ENCODE measurements at regions of chr16 and their contacts with region 1.

Region 1: DNA sequence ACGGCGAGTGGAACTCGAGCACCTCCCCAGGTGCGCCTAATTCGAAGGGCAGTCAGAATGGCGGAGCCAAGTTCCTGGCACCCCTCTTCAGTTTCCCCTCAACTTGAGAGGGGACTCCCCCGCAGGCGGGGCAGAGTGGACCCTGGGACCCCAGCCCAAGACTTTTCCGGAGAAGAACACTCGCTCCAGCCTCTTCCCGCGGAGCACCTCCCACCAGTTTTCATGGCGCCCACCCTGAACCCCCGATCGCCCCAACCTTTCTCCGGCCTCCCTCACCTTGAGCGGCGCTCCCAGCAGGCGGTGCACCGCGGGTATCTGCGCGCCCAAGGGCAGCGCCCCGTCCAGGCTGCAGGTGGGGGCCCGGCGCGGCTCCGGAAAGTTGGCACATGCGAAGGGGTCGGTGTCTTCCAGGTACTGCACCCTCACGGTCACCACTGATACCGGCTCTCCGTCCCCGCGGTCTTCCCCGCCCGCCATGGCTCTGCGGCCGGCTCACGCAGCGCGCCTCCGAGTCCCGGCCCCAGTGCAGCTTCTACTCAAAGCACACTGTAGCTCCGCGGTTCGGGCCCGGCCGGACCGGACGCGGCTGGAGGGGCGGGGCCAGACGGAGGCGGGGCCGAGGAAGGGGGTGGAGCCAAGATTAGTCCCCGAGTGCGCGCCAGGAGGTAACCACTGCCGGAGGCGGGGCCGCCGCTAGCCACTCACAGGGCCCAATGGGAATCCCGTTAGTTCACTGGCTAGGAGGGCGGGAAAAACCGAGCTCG is at the start of gene FHOD1:
- DNase-seq: peak; percentile 88 to 100 (median 91)
- ATAC-seq: peak; percentile 85
- H3K4me3 ChIP-seq: peak within 1 kb of the TSS; percentile 68
- H3K4me3 Mint-ChIP-seq: peak within 1 kb of the TSS; percentile 83 to 96 (median 91)
- H3K27ac ChIP-seq: peak within 1 kb of the TSS; percentile 60
- H3K27ac Mint-ChIP-seq: peak within 1 kb of the TSS; percentile 70 to 92 (median 80)
- H3K4me1 ChIP-seq: peaks cover 31 to 39% of the 10 kb centered on the region in 2 donors
- H3K4me1 Mint-ChIP-seq: peaks cover 37 to 51% (median 45%) of the 10 kb centered on the region in 7 donors
- H3K27me3 ChIP-seq: no peaks in the 10 kb centered on the region
- H3K27me3 Mint-ChIP-seq: peaks cover 0 to 20% (median 0%) of the 10 kb centered on the region in 5 donors
- total RNA-seq, gene FHOD1: 23.7 to 81.7 (median 35.1) TPM

Region 2: DNA sequence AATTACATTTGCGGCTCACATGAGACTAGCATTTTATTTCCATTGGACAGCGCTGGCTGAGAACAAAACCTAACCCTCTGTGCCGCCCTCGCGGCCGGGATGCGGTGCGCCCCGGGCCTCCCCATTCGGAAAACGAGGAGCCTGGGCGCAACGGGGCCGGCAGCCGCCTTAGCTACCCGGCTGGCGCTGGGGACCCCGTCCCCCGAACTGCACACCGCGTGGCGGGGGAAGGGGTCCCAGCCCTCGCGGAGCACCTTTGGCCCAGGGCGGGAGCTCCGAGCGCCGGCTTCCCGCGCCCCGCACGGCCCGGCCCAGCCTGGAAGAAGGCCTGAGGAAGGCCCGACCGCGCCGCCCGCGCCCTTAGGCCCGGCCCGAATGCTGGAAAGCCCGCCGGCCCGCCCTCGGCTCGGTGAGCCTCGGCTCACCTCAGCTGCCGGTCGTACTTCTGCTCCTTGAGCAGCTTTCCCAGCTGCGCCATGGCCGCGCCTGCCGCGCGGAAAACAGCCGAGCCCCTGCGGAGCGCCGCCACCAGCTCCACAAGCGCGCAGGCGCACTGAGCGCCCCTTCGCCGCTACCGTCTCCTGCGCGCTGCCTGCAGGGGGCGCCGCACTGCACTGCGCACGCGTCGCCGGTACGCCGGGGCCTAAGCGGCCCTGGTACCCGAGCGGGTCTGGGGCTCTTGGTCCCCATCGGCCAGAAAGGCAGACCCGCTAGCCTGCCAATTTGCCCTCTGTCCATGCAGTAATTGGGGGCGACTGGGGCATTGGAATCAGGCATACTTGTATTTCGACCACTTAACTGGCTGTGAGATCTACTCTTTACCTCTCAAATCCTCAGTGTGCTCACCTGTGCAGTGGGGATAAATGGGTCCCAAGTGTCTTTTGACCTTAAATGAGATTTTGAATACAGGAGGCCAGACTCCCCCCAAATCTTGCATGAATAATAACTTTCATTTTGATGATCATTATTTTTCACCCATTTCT is 416.4 kb before region 1 on chr16 and contains the start of gene NAE1:
- CTCF ChIA-PET with region 1: no interaction called
- POLR2A ChIA-PET with region 1: no interaction called
- intact Hi-C with region 1: no loop called
- DNase-seq: peak; percentile 82 to 97 (median 93)
- ATAC-seq: peak; percentile 99
- H3K4me3 ChIP-seq: peak within 1 kb of the TSS; percentile 84
- H3K4me3 Mint-ChIP-seq: peak within 1 kb of the TSS; percentile 75 to 89 (median 79)
- H3K27ac ChIP-seq: peak within 1 kb of the TSS; percentile 78
- H3K27ac Mint-ChIP-seq: peak within 1 kb of the TSS in 8 of 9 donors; percentile 32 to 86 (median 59)
- H3K4me1 ChIP-seq: peaks cover 19 to 28% of the 10 kb centered on the region in 2 donors
- H3K4me1 Mint-ChIP-seq: peaks cover 15 to 36% (median 34%) of the 10 kb centered on the region in 7 donors
- H3K27me3 ChIP-seq: no peaks in the 10 kb centered on the region
- H3K27me3 Mint-ChIP-seq: no peaks in the 10 kb centered on the region
- total RNA-seq, gene NAE1: 62.3 to 96.6 (median 90.7) TPM

Region 3: DNA sequence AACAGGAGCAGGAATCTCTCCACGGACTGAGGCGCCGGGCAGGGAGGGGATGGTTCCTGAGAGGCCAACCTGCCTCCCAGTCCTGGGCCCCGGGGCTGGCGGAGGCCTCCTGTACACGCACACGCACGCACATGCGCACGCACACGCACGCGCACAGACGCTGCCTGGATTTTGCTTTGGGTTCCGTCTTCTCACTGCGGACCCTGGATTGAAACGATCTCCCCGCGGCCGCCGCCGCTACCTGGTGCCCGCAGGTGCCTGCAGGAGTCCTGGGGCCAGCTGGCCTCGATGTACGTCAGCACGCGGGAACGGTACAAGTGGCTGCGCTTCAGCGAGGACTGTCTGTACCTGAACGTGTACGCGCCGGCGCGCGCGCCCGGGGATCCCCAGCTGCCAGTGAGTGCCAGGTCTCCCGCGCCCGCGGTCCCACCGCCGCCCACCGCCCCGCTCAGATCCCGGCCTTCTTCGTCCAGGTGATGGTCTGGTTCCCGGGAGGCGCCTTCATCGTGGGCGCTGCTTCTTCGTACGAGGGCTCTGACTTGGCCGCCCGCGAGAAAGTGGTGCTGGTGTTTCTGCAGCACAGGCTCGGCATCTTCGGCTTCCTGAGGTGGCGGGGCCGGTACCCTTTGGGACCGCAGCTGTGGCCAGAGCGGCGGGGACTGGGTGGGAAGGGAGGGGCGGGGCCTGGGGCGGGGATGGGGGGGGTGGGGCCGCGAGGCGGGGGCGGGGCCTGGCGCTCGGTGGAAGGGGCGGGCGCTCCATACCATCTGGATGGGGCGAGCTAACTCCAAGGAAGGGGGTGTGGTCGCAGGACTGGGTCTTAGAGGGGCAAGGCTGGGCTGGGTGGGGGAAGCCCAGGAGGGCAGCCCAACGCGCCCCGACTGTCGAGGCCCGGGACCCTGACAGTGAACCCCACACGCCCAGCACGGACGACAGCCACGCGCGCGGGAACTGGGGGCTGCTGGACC is 246.4 kb before region 1 on chr16:
- CTCF ChIA-PET with region 1: no interaction called
- POLR2A ChIA-PET with region 1: no interaction called
- intact Hi-C with region 1: loop called in 1 of 2 experiments (anchors 2 kb)
- DNase-seq: peak; percentile 39 to 73 (median 61)
- ATAC-seq: peak; percentile 81
- H3K4me3 ChIP-seq: peak overlapping the region; percentile 75
- H3K4me3 Mint-ChIP-seq: peak overlapping the region; percentile 65 to 88 (median 84)
- H3K27ac ChIP-seq: peak overlapping the region; percentile 72
- H3K27ac Mint-ChIP-seq: peak overlapping the region; percentile 68 to 89 (median 80)
- H3K4me1 ChIP-seq: peaks cover 4 to 9% of the 10 kb centered on the region in 2 donors
- H3K4me1 Mint-ChIP-seq: peaks cover 6 to 42% (median 14%) of the 10 kb centered on the region in 7 donors
- H3K27me3 ChIP-seq: no peaks in the 10 kb centered on the region
- H3K27me3 Mint-ChIP-seq: no peaks in the 10 kb centered on the region

Region 4: GRCh38 chr16:67063008-67063407 is 184.1 kb before region 1 on chr16:
- CTCF ChIA-PET with region 1: no interaction called
- POLR2A ChIA-PET with region 1: no interaction called
- intact Hi-C with region 1: no loop called
- DNase-seq: no peak
- ATAC-seq: no peak
- H3K4me3 ChIP-seq: no peak overlapping the region
- H3K4me3 Mint-ChIP-seq: peak overlapping the region in 3 of 10 donors; percentile 10 to 51 (median 14)
- H3K27ac ChIP-seq: no peak overlapping the region
- H3K27ac Mint-ChIP-seq: peak overlapping the region in 5 of 9 donors; percentile 22 to 51 (median 40)
- H3K4me1 ChIP-seq: peaks cover 0 to 7% of the 10 kb centered on the region in 2 donors
- H3K4me1 Mint-ChIP-seq: peaks cover 11 to 27% (median 20%) of the 10 kb centered on the region in 7 donors
- H3K27me3 ChIP-seq: no peaks in the 10 kb centered on the region
- H3K27me3 Mint-ChIP-seq: no peaks in the 10 kb centered on the region

Region 5: GRCh38 chr16:67183627-67184328 is 63.3 kb before region 1 on chr16 and contains the start of gene MATCAP1:
- CTCF ChIA-PET with region 1: no interaction called
- POLR2A ChIA-PET with region 1: no interaction called
- intact Hi-C with region 1: loop called (anchors 1 to 2 kb)
- DNase-seq: peak; percentile 90 to 98 (median 96)
- ATAC-seq: peak; percentile 97
- H3K4me3 ChIP-seq: peak within 1 kb of the TSS; percentile 79
- H3K4me3 Mint-ChIP-seq: peak within 1 kb of the TSS in 5 of 10 donors; percentile 48 to 91 (median 86)
- H3K27ac ChIP-seq: peak within 1 kb of the TSS; percentile 97
- H3K27ac Mint-ChIP-seq: peak within 1 kb of the TSS in 2 of 9 donors; percentile 58 to 67
- H3K4me1 ChIP-seq: peaks cover 12 to 15% of the 10 kb centered on the region in 2 donors
- H3K4me1 Mint-ChIP-seq: peaks cover 8 to 24% (median 13%) of the 10 kb centered on the region in 7 donors
- H3K27me3 ChIP-seq: no peaks in the 10 kb centered on the region
- H3K27me3 Mint-ChIP-seq: peaks cover 4 to 15% (median 4%) of the 10 kb centered on the region in 5 donors
- total RNA-seq, gene MATCAP1: 4.3 to 88.1 (median 11.0) TPM

Region 6: DNA sequence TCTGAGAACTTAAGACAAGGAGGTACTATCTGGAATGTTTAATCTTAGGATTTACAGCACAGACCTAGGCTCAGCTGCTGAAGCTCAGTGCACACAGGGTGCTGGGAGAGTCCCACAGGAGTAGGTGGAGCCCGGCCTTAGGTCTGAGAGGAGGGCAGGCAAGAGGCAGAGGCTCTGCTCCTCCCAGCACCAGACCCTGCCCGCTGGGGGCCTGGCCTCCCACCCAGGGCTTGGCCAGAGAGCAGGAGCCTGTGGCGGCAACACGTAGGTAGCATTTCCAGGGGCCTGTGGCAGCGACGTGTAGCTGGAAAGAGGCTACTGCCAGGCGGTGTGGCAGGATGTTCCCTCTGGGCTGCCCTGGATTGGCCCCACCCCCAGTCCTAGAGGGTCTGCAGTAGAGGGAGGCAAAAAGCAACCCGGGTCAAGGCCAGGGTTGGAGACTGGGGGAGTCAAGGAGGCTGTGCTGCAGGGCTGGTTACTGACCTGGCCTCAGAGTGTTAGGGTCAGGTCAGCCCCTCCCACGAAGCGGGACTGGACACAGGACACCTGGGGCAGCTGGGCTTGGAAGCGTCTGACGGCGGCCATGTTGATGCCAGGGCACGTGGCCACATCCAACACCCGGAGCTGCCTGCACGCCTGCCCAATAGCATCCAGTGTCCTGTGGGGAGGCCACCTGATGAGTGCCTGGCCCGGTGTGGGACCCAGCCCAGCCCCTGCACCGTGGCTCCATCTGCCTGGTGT is 39.8 kb before region 1 on chr16:
- CTCF ChIA-PET with region 1: no interaction called
- POLR2A ChIA-PET with region 1: no interaction called
- intact Hi-C with region 1: no loop called
- DNase-seq: no peak
- ATAC-seq: no peak
- H3K4me3 ChIP-seq: no peak overlapping the region
- H3K4me3 Mint-ChIP-seq: no peak overlapping the region
- H3K27ac ChIP-seq: no peak overlapping the region
- H3K27ac Mint-ChIP-seq: no peak overlapping the region
- H3K4me1 ChIP-seq: no peaks in the 10 kb centered on the region
- H3K4me1 Mint-ChIP-seq: peaks cover 0 to 3% (median 0%) of the 10 kb centered on the region in 7 donors
- H3K27me3 ChIP-seq: no peaks in the 10 kb centered on the region
- H3K27me3 Mint-ChIP-seq: no peaks in the 10 kb centered on the region

Region 7: GRCh38 chr16:67236563-67237395 is 10.3 kb before region 1 on chr16:
- CTCF ChIA-PET with region 1: no interaction called
- POLR2A ChIA-PET with region 1: interaction called, 7 read pairs
- intact Hi-C with region 1: loop called in 1 of 2 experiments (anchors 1 kb)
- DNase-seq: peak; percentile 47 to 89 (median 53)
- ATAC-seq: peak; percentile 94
- H3K4me3 ChIP-seq: no peak overlapping the region
- H3K4me3 Mint-ChIP-seq: peak overlapping the region in 7 of 10 donors; percentile 18 to 61 (median 50)
- H3K27ac ChIP-seq: no peak overlapping the region
- H3K27ac Mint-ChIP-seq: peak overlapping the region in 7 of 9 donors; percentile 61 to 87 (median 77)
- H3K4me1 ChIP-seq: peaks cover 0 to 5% of the 10 kb centered on the region in 2 donors
- H3K4me1 Mint-ChIP-seq: peaks cover 0 to 21% (median 4%) of the 10 kb centered on the region in 7 donors
- H3K27me3 ChIP-seq: no peaks in the 10 kb centered on the region
- H3K27me3 Mint-ChIP-seq: no peaks in the 10 kb centered on the region

Region 8: DNA sequence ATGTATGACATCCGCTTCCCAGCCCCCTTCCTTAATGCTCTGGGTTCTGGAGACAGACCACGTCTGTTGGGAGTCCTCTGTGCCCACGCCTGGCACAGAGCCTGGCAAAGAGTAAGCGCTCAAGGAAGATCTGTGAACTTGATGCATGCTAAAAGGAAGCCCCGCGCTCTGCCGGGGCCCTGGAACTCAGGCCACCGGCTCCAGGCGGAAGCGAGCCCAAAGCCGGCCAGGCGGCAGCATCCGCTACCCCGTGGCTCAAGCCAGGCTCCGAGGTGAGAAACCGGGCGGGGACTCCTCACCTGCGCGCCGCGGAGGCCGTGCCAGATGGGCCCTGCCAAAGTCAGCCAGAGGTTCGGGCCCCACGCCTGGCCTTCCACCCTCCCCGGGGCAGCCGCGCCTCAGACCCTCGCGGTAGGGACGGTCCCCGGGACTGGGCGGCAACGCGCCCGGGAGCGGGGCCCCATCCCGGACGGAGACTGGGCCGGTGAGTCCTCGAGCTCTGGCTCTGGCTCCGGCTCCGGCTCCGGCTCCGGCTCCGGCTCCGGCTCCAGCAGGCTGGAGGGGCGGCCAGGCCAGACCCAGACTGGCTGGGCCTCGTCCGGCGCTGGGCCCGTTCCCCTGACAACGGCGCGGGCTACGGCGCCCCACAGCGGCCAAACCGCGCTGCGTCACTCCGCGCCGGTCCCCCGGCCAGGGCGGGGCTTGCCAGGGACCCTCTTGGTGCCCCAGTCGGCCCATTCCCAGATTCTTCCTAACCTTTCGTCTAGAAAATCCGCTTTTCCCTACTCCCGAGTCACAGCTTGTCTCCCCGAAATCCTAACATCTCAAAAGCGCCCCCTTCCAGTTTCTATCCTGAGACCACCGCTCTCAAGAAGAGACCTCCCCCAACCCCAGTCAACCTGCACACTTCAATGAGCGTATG is 169.0 kb after region 1 on chr16 and contains the start of gene ZDHHC1:
- CTCF ChIA-PET with region 1: no interaction called
- POLR2A ChIA-PET with region 1: no interaction called
- intact Hi-C with region 1: no loop called
- DNase-seq: peak in 5 of 9 donors; percentile 19 to 76 (median 45)
- ATAC-seq: peak; percentile 90
- H3K4me3 ChIP-seq: peak within 1 kb of the TSS; percentile 30
- H3K4me3 Mint-ChIP-seq: peak within 1 kb of the TSS; percentile 67 to 88 (median 76)
- H3K27ac ChIP-seq: no peak within 1 kb of the TSS
- H3K27ac Mint-ChIP-seq: peak within 1 kb of the TSS in 3 of 9 donors; percentile 11 to 82 (median 63)
- H3K4me1 ChIP-seq: no peaks in the 10 kb centered on the region
- H3K4me1 Mint-ChIP-seq: peaks cover 5 to 15% (median 10%) of the 10 kb centered on the region in 7 donors
- H3K27me3 ChIP-seq: peaks cover 3 to 4% of the 10 kb centered on the region in 2 donors
- H3K27me3 Mint-ChIP-seq: peaks cover 22 to 42% (median 34%) of the 10 kb centered on the region in 5 donors
- total RNA-seq, gene ZDHHC1: 0.34 to 3.6 (median 0.48) TPM in 3 of 5 experiments, not detected in the others

Region 9: DNA sequence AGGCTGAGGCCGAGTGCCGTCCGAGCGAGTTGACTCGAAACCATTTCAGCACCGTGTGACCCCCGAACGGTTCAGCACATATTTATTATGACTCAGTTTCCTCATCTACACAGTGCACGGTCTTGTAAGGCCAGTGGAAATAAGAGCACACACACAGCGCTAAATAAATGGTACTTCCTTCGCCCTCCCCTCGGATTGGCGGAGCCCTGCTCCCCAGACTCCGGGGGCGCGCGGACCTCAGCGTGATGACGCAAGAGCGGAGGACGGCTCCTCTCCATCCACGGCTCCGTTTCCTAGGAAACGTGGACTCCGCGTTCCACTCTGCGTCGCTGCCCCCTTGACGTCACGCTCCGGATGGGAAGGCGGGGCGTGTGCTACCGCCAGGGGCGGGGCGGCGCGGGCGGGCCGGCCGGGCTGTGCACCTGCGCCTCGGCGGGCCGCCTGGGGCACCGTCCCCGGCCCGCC is 413.5 kb after region 1 on chr16 and contains the start of gene PARD6A:
- CTCF ChIA-PET with region 1: no interaction called
- POLR2A ChIA-PET with region 1: no interaction called
- intact Hi-C with region 1: loop called in 1 of 2 experiments (anchors 1 kb)
- DNase-seq: peak; percentile 81 to 95 (median 93)
- ATAC-seq: peak; percentile 89
- H3K4me3 ChIP-seq: peak within 1 kb of the TSS; percentile 99
- H3K4me3 Mint-ChIP-seq: peak within 1 kb of the TSS; percentile 90 to 97 (median 94)
- H3K27ac ChIP-seq: peak within 1 kb of the TSS; percentile 97
- H3K27ac Mint-ChIP-seq: peak within 1 kb of the TSS; percentile 84 to 98 (median 97)
- H3K4me1 ChIP-seq: peaks cover 11 to 17% of the 10 kb centered on the region in 2 donors
- H3K4me1 Mint-ChIP-seq: peaks cover 15 to 40% (median 22%) of the 10 kb centered on the region in 7 donors
- H3K27me3 ChIP-seq: no peaks in the 10 kb centered on the region
- H3K27me3 Mint-ChIP-seq: no peaks in the 10 kb centered on the region
- total RNA-seq, gene PARD6A: 4.5 to 11.2 (median 4.7) TPM

Region 10: GRCh38 chr16:69132424-69133252 is 1885.5 kb after region 1 on chr16 and contains the starts of genes CHTF8 and UTP4:
- CTCF ChIA-PET with region 1: no interaction called
- POLR2A ChIA-PET with region 1: no interaction called
- intact Hi-C with region 1: loop called in 1 of 2 experiments (anchors 5 kb)
- DNase-seq: peak; percentile 81 to 91 (median 87)
- ATAC-seq: peak; percentile 95
- H3K4me3 ChIP-seq: peak within 1 kb of the TSS; percentile 80
- H3K4me3 Mint-ChIP-seq: peak within 1 kb of the TSS; percentile 91 to 97 (median 94)
- H3K27ac ChIP-seq: peak within 1 kb of the TSS; percentile 88
- H3K27ac Mint-ChIP-seq: peak within 1 kb of the TSS; percentile 85 to 97 (median 95)
- H3K4me1 ChIP-seq: peaks cover 12 to 23% of the 10 kb centered on the region in 2 donors
- H3K4me1 Mint-ChIP-seq: peaks cover 16 to 71% (median 61%) of the 10 kb centered on the region in 7 donors
- H3K27me3 ChIP-seq: no peaks in the 10 kb centered on the region
- H3K27me3 Mint-ChIP-seq: no peaks in the 10 kb centered on the region
- total RNA-seq, gene CHTF8: 53.3 to 142 (median 133) TPM
- total RNA-seq, gene UTP4: 31.9 to 56.5 (median 35.1) TPM

Measured in naive thymus-derived CD4-positive, alpha-beta T cell (primary cell).